T-cell (primary cell): ENCODE measurements at regions of chr2 and their contacts with region 1.

Region 1: DNA sequence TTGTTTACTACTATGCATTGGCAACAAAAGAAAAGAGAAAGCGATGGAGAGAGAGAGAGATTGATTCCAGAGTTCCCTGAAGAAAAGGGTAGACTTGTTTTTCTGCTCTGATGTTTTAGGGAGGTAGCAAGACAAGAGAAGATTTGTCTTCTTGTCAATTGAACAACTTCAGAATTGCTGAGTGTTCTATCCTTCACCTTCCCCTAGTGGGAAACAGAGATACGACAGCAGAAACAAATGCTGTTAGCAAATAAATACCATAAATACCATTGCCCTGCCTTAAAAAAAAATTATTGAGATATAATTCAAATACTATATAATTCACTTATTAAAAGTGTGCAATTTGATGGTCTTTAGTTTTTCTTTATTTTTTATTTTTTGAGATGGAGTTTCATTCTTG is 26.2 kb upstream of the CCDC150 start:
- DNase-seq: no peak
- ATAC-seq: no peak
- H3K4me3 ChIP-seq: no peak overlapping the region
- H3K4me3 Mint-ChIP-seq: no peak overlapping the region
- H3K27ac ChIP-seq: no peak overlapping the region
- H3K27ac Mint-ChIP-seq: no peak overlapping the region
- H3K4me1 ChIP-seq: no peaks in the 10 kb centered on the region
- H3K4me1 Mint-ChIP-seq: no peaks in the 10 kb centered on the region
- H3K27me3 ChIP-seq: no peaks in the 10 kb centered on the region
- H3K27me3 Mint-ChIP-seq: peaks cover 0 to 2% of the 10 kb centered on the region in 2 donors

Region 2: GRCh38 chr2:196415384-196415783 is 197.9 kb before region 1 on chr2:
- CTCF ChIA-PET with region 1: interaction called in 1 of 2 experiments, 10 read pairs
- POLR2A ChIA-PET with region 1: no interaction called
- DNase-seq: peak in 3 of 35 experiments; percentile 0 to 25 (median 4)
- ATAC-seq: peak in 3 of 4 experiments; percentile 61 to 84 (median 71)
- H3K4me3 ChIP-seq: no peak overlapping the region
- H3K4me3 Mint-ChIP-seq: peak overlapping the region; percentile 58 to 70 (median 65)
- H3K27ac ChIP-seq: no peak overlapping the region
- H3K27ac Mint-ChIP-seq: peak overlapping the region in 1 of 2 donors; percentile 50
- H3K4me1 ChIP-seq: no peaks in the 10 kb centered on the region
- H3K4me1 Mint-ChIP-seq: peaks cover 9 to 17% (median 16%) of the 10 kb centered on the region in 3 donors
- H3K27me3 ChIP-seq: peaks cover 0 to 2% of the 10 kb centered on the region in 2 experiments
- H3K27me3 Mint-ChIP-seq: peaks cover 3 to 11% of the 10 kb centered on the region in 2 donors

Region 3: DNA sequence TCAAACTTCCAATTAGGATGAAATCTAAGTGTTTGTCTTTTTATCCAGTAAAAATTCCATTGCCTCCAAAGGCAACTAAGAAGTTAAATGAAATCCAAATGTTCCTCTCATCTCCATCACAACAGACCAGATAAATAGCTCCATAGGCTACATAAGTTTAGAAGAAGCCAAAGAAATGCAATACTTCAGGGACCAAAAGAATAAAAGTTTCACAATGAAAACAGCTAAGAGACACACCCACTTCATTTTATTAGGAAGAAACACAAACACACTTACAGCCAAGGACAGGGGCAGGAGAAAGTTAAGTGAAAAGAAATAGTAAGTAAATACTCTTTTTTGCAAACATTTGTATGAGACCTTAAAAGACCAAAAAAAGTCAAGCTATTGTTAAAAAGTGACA is 62.3 kb before region 1 on chr2:
- CTCF ChIA-PET with region 1: no interaction called
- POLR2A ChIA-PET with region 1: no interaction called
- DNase-seq: no peak
- ATAC-seq: no peak
- H3K4me3 ChIP-seq: no peak overlapping the region
- H3K4me3 Mint-ChIP-seq: no peak overlapping the region
- H3K27ac ChIP-seq: no peak overlapping the region
- H3K27ac Mint-ChIP-seq: no peak overlapping the region
- H3K4me1 ChIP-seq: no peaks in the 10 kb centered on the region
- H3K4me1 Mint-ChIP-seq: no peaks in the 10 kb centered on the region
- H3K27me3 ChIP-seq: no peaks in the 10 kb centered on the region
- H3K27me3 Mint-ChIP-seq: peaks cover 4 to 11% of the 10 kb centered on the region in 2 donors

Region 4: DNA sequence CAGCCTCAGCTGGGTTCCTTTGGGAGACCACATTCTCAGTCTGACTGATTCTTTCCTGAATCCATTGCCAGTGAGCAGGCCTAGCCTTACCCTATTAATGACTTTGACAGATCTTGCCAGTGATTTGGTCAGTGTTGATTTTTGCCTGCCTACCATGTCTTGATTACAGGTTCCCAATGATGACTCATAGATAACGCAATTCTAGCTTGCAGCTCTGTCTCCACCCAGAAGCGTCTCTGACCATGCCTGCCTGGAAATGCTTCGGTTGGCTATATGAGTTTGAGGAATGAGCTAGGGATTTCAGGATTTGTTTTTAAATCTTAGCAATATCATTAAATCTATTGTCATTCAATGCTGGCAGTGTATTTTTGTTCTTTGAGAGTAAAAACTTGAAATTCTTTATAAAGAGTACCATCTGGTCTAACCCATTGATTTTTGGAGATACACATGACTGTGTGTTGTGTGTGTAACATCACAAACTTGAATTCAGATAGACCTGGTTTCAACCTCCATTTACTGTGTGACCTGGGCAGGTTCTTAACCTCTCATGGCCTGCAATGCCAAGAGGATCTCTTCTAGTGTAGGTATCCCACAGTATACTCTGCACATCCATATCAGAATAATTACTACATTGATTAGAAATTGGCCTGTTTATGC is 83.2 kb after region 1 on chr2:
- CTCF ChIA-PET with region 1: no interaction called
- POLR2A ChIA-PET with region 1: no interaction called
- DNase-seq: no peak
- ATAC-seq: no peak
- H3K4me3 ChIP-seq: no peak overlapping the region
- H3K4me3 Mint-ChIP-seq: no peak overlapping the region
- H3K27ac ChIP-seq: no peak overlapping the region
- H3K27ac Mint-ChIP-seq: no peak overlapping the region
- H3K4me1 ChIP-seq: no peaks in the 10 kb centered on the region
- H3K4me1 Mint-ChIP-seq: no peaks in the 10 kb centered on the region
- H3K27me3 ChIP-seq: peaks cover 0 to 3% of the 10 kb centered on the region in 2 experiments
- H3K27me3 Mint-ChIP-seq: peaks cover 0 to 4% of the 10 kb centered on the region in 2 donors